SK-N-SH (cell line): ENCODE measurements at regions of chr1 and their contacts with region 1.

Region 1: DNA sequence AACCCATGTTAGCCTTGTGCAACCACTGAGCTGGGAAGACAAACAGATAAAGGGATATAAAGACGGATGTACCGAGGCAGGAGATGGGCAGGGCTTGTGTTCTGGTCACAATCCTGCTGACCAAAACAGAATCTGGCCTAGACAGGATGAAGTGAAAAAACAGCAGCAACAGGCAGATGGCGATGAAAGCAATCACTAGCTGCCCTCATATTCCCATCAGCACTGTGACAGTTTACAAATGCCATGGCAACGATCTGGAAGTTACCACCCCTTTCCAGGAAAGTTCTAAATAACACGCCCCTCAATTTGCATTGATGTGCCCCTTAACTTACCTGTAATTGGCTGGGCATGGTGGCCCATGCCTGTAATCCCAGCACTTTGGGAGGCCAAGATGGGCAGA is 40.6 kb upstream of the CD46 start:
- DNase-seq: no peak
- H3K4me3 ChIP-seq: no peak overlapping the region
- H3K27ac ChIP-seq: no peak overlapping the region
- H3K4me1 ChIP-seq: peaks cover 3 to 4% of the 10 kb centered on the region in 2 experiments; a peak in 1 of 4 replicates
- H3K27me3 ChIP-seq: no peaks in the 10 kb centered on the region
- CTCF ChIP-seq: no peak
- EP300 ChIP-seq: no peak
- RAD21 ChIP-seq: peak; percentile 5; the same call in 1 of the 2 replicates

Region 2: GRCh38 chr1:207698822-207699483 is 12.3 kb before region 1 on chr1:
- CTCF ChIA-PET with region 1: interaction called, 12 read pairs
- POLR2A ChIA-PET with region 1: no interaction called
- DNase-seq: peak; percentile 24
- H3K4me3 ChIP-seq: no peak overlapping the region
- H3K27ac ChIP-seq: no peak overlapping the region
- H3K4me1 ChIP-seq: no peaks in the 10 kb centered on the region
- H3K27me3 ChIP-seq: no peaks in the 10 kb centered on the region
- CTCF ChIP-seq: peak; percentile 76
- EP300 ChIP-seq: no peak
- RAD21 ChIP-seq: peak; percentile 74

Region 3: GRCh38 chr1:208115924-208116640 is 404.8 kb after region 1 on chr1:
- CTCF ChIA-PET with region 1: no interaction called
- POLR2A ChIA-PET with region 1: no interaction called
- DNase-seq: no peak
- H3K4me3 ChIP-seq: no peak overlapping the region
- H3K27ac ChIP-seq: no peak overlapping the region
- H3K4me1 ChIP-seq: peaks cover 6 to 19% of the 10 kb centered on the region in 2 experiments; a peak in 2 of 4 replicates
- H3K27me3 ChIP-seq: no peaks in the 10 kb centered on the region
- CTCF ChIP-seq: no peak
- EP300 ChIP-seq: no peak
- RAD21 ChIP-seq: no peak